Astrocyte of the cerebellum (primary cell): ENCODE measurements at regions of chr1 and their contacts with region 1.

Region 1: GRCh38 chr1:154791292-154792166 is 78.6 kb downstream of the KCNN3 start:
- DNase-seq: peak; percentile 27
- H3K4me3 ChIP-seq: no peak overlapping the region
- CTCF ChIP-seq: no peak

Region 2: DNA sequence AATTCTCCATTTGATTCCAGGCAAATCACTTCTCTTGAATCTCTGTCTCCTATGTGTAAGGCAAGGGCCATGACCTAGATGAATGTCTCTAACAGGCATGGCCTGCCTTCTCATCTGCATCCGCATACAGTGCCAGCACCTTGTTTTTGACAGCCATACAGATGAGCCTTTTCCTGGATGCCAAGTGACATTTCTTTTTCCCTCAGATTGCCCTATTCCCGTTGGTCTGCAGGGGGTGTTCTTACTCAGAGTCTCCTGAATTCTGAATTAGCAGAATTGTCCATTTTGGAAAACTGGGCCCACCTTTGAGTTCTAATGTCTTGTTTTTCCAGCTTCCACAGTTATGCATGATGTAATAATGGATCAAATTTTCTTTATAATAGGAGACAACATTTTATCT is 95.5 kb before region 1 on chr1:
- in situ Hi-C with region 1: loop called (anchors 25 kb)
- DNase-seq: no peak
- H3K4me3 ChIP-seq: no peak overlapping the region
- CTCF ChIP-seq: peak; percentile 41